PC-3 (cell line): ENCODE measurements at regions of chr5 and their contacts with region 1.

Region 1: DNA sequence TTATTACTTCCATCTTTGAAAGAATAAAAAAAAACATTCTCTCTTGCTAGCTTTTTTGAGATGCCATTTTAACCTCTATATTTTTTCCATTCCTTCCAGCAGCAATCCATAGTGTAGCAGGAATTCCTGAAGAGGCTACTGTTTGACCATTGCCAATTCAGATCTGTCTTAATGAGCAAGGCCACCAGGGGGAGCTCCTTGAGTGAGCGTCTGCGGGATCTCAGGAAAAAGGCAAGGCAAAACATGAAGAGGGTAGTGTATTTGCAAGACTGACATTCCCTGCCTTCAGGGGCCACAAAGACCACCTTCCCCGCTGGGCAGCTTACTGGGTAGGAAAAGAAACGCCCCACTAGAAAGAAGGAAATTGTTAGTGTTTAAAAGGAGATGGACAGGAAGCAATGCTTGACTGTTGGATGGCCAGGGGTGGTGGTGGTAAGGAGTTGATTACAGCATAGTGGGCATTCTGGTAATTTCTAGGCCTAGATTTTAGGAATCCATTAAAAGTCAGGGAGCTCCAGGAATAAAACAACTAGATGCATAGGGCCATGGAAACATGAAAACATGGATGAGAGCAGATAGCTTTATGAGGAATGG is 206.6 kb upstream of the HAPLN1 start:
- DNase-seq: peak; percentile 79
- ATAC-seq: peak; percentile 31; the same call in 1 of the 2 replicates
- H3K4me3 ChIP-seq: no peak overlapping the region
- H3K27ac ChIP-seq: no peak overlapping the region
- H3K4me1 ChIP-seq: peaks cover 6% of the 10 kb centered on the region; the same call in 1 of the 2 replicates
- H3K27me3 ChIP-seq: no peaks in the 10 kb centered on the region
- CTCF ChIP-seq: peak; percentile 86

Region 2: GRCh38 chr5:82931110-82931509 is 996.1 kb before region 1 on chr5:
- CTCF ChIA-PET with region 1: no interaction called
- POLR2A ChIA-PET with region 1: no interaction called
- intact Hi-C with region 1: no loop called
- DNase-seq: peak; percentile 95
- ATAC-seq: peak; percentile 98
- H3K4me3 ChIP-seq: peak overlapping the region; percentile 17; the same call in 1 of the 2 replicates
- H3K27ac ChIP-seq: peak overlapping the region; percentile 80
- H3K4me1 ChIP-seq: peaks cover 19% of the 10 kb centered on the region
- H3K27me3 ChIP-seq: no peaks in the 10 kb centered on the region
- CTCF ChIP-seq: no peak

Region 3: DNA sequence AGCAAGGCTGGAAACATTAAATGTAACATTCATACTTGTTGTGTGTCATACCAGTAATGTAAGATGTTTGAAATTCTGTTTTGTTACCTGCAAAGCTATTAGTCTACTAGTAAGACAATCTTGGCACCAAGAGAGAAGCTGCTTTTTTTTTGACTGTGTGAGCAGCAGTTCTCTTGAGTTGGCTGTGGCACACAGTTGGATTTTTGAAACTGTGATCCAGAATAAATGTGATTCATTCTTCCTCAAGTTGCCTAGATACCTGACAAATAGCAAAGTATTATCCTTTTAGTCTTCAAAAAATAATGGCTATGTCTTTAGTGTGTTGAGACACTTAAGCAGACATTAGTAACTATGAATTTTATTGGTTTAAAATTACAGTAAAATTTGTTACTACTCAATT is 149.4 kb before region 1 on chr5:
- CTCF ChIA-PET with region 1: no interaction called
- POLR2A ChIA-PET with region 1: no interaction called
- intact Hi-C with region 1: no loop called
- DNase-seq: no peak
- ATAC-seq: no peak
- H3K4me3 ChIP-seq: no peak overlapping the region
- H3K27ac ChIP-seq: no peak overlapping the region
- H3K4me1 ChIP-seq: peaks cover 17% of the 10 kb centered on the region
- H3K27me3 ChIP-seq: no peaks in the 10 kb centered on the region
- CTCF ChIP-seq: no peak

Region 4: DNA sequence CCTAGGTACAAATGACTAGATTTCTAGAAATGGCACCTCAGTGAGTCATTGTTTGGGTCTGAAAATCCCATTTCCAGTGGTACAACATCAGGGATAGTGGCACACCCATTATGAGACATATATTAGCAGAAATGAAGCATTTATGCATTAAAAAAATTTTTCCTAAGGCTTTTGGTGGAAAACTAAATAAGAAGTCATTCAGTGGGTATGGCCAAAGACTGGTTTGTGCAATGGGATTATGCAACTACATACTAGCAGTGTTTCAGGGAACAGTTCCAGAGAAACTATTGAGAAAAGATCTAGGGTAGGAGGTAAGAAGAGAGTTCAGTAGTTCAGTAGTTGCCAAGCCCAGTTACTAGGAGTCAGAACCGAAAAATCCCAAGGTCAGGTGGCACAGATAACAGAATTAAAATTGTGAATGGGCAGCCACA is 100.1 kb before region 1 on chr5:
- CTCF ChIA-PET with region 1: no interaction called
- POLR2A ChIA-PET with region 1: no interaction called
- intact Hi-C with region 1: no loop called
- DNase-seq: peak; percentile 70
- ATAC-seq: peak; percentile 64
- H3K4me3 ChIP-seq: no peak overlapping the region
- H3K27ac ChIP-seq: no peak overlapping the region
- H3K4me1 ChIP-seq: peaks cover 10% of the 10 kb centered on the region; the same call in 1 of the 2 replicates
- H3K27me3 ChIP-seq: no peaks in the 10 kb centered on the region
- CTCF ChIP-seq: no peak

Region 5: GRCh38 chr5:83947763-83948162 is 20.5 kb after region 1 on chr5:
- CTCF ChIA-PET with region 1: no interaction called
- POLR2A ChIA-PET with region 1: no interaction called
- intact Hi-C with region 1: no loop called
- DNase-seq: no peak
- ATAC-seq: no peak
- H3K4me3 ChIP-seq: no peak overlapping the region
- H3K27ac ChIP-seq: no peak overlapping the region
- H3K4me1 ChIP-seq: no peaks in the 10 kb centered on the region
- H3K27me3 ChIP-seq: no peaks in the 10 kb centered on the region
- CTCF ChIP-seq: no peak

Region 6: GRCh38 chr5:84249918-84250630 is 322.8 kb after region 1 on chr5:
- CTCF ChIA-PET with region 1: no interaction called
- POLR2A ChIA-PET with region 1: no interaction called
- intact Hi-C with region 1: loop called (anchors 5 kb)
- DNase-seq: peak; percentile 84
- ATAC-seq: peak; percentile 76
- H3K4me3 ChIP-seq: peak overlapping the region; percentile 47; the same call in 1 of the 2 replicates
- H3K27ac ChIP-seq: peak overlapping the region; percentile 58
- H3K4me1 ChIP-seq: peaks cover 54% of the 10 kb centered on the region
- H3K27me3 ChIP-seq: no peaks in the 10 kb centered on the region
- CTCF ChIP-seq: no peak

Region 7: DNA sequence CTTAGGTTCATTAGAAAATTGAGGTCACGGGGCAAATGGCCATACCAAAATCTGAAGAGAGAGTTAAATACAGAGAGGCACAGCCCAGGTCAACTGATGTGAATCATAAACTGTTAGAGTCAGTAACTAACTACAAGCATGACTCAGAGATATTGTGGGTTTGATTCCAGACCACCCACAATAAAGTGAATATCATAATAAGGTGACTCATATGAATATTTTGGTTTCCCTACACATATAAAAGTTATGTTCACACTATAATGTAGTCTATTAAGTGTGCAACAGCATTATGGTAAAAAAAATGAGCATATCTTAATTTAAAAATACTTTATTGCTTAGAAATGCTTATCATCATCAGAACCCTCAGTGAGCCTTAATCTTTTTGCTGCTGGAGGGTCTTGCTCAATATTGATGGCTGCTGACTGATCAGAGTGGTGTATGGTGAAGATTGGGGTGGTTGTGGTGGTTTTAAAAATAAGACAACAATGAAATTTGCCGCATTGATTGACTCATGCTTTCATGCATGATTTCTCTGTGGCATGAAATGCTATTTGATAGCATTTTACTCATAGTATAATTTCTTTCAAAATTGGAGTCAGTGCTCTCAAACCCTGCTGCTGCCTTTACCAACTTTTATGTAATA is 510.6 kb after region 1 on chr5:
- CTCF ChIA-PET with region 1: no interaction called
- POLR2A ChIA-PET with region 1: no interaction called
- intact Hi-C with region 1: loop called (anchors 5 kb)
- DNase-seq: peak; percentile 84
- ATAC-seq: peak; percentile 93
- H3K4me3 ChIP-seq: no peak overlapping the region
- H3K27ac ChIP-seq: peak overlapping the region; percentile 84
- H3K4me1 ChIP-seq: peaks cover 18% of the 10 kb centered on the region
- H3K27me3 ChIP-seq: no peaks in the 10 kb centered on the region
- CTCF ChIP-seq: no peak